Activated CD8-positive, alpha-beta T cell treated with anti-CD3 and anti-CD28 coated beads, Interleukin-2, amount 10 ng/mL, durations not matched to agents 7 days and 5 days (primary cell): ENCODE measurements at regions of chr2 and their contacts with region 1.

Region 1: GRCh38 chr2:231104115-231104713 is 20.6 kb downstream of the HTR2B start:
- DNase-seq: peak; percentile 76
- ATAC-seq: peak; percentile 76
- H3K4me3 Mint-ChIP-seq: no peak overlapping the region
- H3K27ac Mint-ChIP-seq: no peak overlapping the region
- H3K4me1 Mint-ChIP-seq: no peaks in the 10 kb centered on the region
- H3K27me3 Mint-ChIP-seq: no peaks in the 10 kb centered on the region

Region 2: DNA sequence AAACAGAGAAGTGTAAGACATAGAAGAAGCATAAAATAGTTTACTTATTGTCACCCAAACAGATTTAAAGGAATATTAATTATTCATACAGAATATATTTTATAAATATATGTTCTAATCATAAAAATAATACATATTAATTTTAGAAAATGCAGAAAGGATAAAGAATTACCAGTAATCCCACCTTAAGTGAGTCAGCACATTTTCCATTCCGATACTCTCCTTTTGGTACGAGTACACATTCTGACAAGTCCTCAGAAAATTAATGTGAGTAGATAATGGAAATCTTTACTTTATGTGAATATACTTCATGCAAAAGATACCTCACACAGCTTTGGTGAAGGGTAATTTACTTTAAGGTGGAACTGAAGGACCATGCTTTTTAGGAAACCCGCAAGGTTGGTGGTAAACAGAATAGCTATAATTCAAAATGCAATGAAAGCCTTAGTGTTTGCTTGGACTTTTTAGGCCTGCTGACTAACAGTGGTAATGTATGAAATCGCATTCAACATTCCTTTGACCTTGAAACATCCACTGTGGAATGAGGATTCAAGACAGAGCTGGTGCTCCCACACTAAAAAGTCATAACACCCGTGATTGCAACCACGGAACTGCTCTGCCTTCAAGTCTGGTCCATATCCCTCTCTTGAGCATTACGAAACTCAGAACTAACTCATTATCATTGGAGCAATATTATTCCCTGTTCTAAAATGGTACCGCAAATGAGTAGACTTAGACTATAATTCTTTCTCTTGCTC is 48.8 kb after region 1 on chr2:
- CTCF ChIA-PET with region 1: interaction called, 10 read pairs
- POLR2A ChIA-PET with region 1: no interaction called
- DNase-seq: no peak
- ATAC-seq: no peak
- H3K4me3 Mint-ChIP-seq: no peak overlapping the region
- H3K27ac Mint-ChIP-seq: no peak overlapping the region
- H3K4me1 Mint-ChIP-seq: no peaks in the 10 kb centered on the region
- H3K27me3 Mint-ChIP-seq: no peaks in the 10 kb centered on the region

Region 3: DNA sequence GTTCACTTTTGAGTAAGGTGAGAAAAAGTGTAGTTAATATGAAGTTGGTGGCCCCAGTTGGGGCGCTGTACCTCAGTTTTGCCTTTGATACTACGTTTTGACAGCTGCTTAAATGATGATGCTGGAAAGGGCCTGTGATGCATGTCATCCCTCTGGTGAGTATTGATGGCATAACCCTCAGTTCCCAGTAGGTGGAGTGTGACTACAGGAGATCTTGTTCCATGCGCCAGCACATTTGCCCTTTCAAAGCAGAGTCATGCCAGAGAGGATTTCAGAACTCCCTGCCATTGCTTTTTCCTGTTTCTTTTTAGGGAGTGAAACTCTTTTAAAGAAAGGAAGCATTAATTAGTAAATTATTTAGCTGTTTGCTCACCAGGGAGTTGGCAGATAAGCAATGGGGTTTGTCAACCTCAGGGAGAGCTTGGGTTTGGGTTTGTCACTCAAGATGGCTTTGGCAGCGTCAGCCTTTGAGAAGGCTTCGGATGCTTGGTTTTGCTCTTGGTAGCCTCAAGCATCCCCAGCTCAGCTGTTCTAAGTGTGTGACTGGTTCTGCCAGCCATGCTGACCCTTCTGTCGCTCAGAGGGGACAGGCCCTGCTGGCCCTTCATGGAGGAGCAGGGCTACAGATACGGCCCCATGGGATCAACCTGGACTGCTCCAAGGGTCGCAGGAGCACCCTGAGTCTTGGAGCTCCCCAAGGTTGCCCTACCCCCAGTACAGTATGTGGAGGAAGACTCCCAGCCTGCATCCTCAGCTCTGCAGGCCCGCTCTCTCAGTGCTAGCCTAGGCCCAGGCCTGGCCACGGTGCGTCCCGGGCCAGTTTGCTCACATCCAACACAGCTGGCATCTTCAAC is 123.3 kb after region 1 on chr2:
- CTCF ChIA-PET with region 1: interaction called, 16 read pairs
- POLR2A ChIA-PET with region 1: no interaction called
- DNase-seq: peak; percentile 68
- ATAC-seq: peak; percentile 93
- H3K4me3 Mint-ChIP-seq: no peak overlapping the region
- H3K27ac Mint-ChIP-seq: no peak overlapping the region
- H3K4me1 Mint-ChIP-seq: no peaks in the 10 kb centered on the region
- H3K27me3 Mint-ChIP-seq: no peaks in the 10 kb centered on the region

Region 4: GRCh38 chr2:231399853-231400680 is 295.9 kb after region 1 on chr2:
- CTCF ChIA-PET with region 1: interaction called, 12 read pairs
- POLR2A ChIA-PET with region 1: no interaction called
- DNase-seq: no peak
- ATAC-seq: no peak
- H3K4me3 Mint-ChIP-seq: no peak overlapping the region
- H3K27ac Mint-ChIP-seq: no peak overlapping the region
- H3K4me1 Mint-ChIP-seq: peaks cover 8% of the 10 kb centered on the region
- H3K27me3 Mint-ChIP-seq: peaks cover 17% of the 10 kb centered on the region

Region 5: DNA sequence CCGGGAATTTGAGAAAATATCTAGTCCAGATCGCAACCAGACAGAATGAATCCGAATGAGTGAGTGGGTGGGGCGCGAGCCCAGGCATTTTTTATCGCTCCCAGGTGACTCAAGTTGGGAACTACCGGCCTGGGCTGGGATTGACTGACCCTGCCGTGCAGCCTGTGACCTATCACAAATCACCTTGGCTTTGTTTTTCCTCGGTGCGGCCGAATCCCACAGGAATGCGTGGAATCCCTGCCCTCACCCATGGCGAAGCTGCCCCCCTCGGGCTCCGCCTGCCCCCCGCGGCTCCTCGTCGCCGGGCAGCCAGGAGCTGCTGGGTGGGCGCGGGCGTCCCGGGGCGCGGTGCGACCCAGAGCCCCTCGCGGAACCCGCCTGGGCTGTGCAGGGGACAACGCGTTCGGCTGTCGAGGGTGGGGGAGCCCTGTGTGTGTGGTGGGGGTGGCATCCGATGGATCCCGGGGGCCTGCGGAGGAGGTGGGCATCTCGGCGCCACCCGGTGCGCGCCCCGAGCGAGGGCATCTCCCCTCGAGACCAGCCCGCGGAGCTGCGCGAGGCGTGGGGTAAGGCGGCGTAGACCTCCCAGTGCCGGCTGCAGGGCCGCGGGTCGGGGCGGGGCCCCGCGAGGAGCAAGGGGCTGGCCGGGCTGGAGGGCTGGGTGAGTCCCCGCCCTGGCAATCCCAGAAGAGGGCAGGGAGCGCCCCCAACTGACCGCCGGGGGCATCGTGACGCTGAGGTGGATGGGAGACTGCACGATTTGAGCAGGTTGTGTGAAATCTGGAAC is 307.8 kb after region 1 on chr2:
- CTCF ChIA-PET with region 1: interaction called, 26 read pairs
- POLR2A ChIA-PET with region 1: no interaction called
- DNase-seq: peak; percentile 80
- ATAC-seq: peak; percentile 99
- H3K4me3 Mint-ChIP-seq: peak overlapping the region; percentile 54
- H3K27ac Mint-ChIP-seq: no peak overlapping the region
- H3K4me1 Mint-ChIP-seq: peaks cover 6% of the 10 kb centered on the region
- H3K27me3 Mint-ChIP-seq: peaks cover 38% of the 10 kb centered on the region

Region 6: GRCh38 chr2:231452799-231453508 is 348.7 kb after region 1 on chr2:
- CTCF ChIA-PET with region 1: interaction called, 48 read pairs
- POLR2A ChIA-PET with region 1: no interaction called
- DNase-seq: no peak
- ATAC-seq: no peak
- H3K4me3 Mint-ChIP-seq: no peak overlapping the region
- H3K27ac Mint-ChIP-seq: peak overlapping the region; percentile 39
- H3K4me1 Mint-ChIP-seq: peaks cover 16% of the 10 kb centered on the region
- H3K27me3 Mint-ChIP-seq: no peaks in the 10 kb centered on the region